ENCODE measurements at regions of chr11 and their contacts with region 1.

Region 1: DNA sequence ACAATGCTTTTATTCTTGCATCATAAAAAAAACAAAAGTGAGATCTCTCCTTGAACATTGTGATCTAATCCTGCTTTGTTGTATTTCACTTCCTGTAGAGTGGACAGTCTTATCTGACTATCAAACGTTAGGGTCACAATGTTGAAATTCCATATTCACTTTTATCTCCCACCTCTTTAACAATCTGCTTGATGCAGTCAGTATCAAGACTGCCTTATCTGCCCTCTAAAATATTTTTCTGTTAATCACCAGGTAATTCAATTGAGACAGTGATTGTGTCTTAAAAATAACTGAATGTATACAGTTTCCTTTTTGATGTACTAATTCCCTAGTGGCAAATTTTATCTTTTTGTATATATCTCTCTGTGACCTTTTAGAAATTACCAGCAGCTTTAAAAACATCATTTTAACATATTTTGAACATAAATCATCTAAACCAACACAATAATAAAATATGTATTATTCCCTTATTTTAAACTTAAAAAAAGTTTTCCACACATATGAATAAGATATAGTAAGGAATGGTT is 143.1 kb upstream of the MPPED2 start:
- DNase-seq: no peak
- ATAC-seq: no peak
- H3K4me3 Mint-ChIP-seq: no peak overlapping the region
- H3K27ac Mint-ChIP-seq: no peak overlapping the region
- H3K4me1 Mint-ChIP-seq: no peaks in the 10 kb centered on the region
- H3K27me3 Mint-ChIP-seq: no peaks in the 10 kb centered on the region
- CTCF ChIP-seq: no peak

Region 2: GRCh38 chr11:28743061-28743550 is 1986.1 kb before region 1 on chr11:
- CTCF ChIA-PET with region 1: no interaction called
- POLR2A ChIA-PET with region 1: no interaction called
- intact Hi-C with region 1: loop called (anchors 10 kb)
- DNase-seq: no peak
- ATAC-seq: no peak
- H3K4me3 Mint-ChIP-seq: no peak overlapping the region
- H3K27ac Mint-ChIP-seq: no peak overlapping the region
- H3K4me1 Mint-ChIP-seq: no peaks in the 10 kb centered on the region
- H3K27me3 Mint-ChIP-seq: no peaks in the 10 kb centered on the region
- CTCF ChIP-seq: no peak

Region 3: DNA sequence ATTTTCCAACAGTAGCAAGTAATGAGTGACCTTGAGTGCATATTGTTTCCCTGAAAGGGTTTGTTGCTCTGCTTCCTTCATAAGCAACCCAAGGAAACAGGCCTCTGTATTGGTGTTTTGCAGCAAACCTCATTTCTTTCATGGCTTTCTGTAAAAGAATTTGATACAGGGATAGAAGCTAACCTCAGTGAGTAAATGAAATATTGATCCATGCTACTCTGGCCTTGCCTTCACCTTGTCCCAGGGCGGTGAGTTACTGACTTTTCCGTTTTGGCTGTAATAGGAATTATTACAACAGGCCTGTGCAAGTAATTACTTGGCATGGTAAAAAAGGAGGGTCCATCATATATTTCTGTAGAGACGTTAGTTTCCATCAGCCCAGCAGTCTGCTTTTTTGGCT is 12.2 kb before region 1 on chr11:
- CTCF ChIA-PET with region 1: no interaction called
- POLR2A ChIA-PET with region 1: no interaction called
- intact Hi-C with region 1: no loop called
- DNase-seq: no peak
- ATAC-seq: no peak
- H3K4me3 Mint-ChIP-seq: no peak overlapping the region
- H3K27ac Mint-ChIP-seq: no peak overlapping the region
- H3K4me1 Mint-ChIP-seq: no peaks in the 10 kb centered on the region
- H3K27me3 Mint-ChIP-seq: no peaks in the 10 kb centered on the region
- CTCF ChIP-seq: no peak